ENCODE measurements at regions of chr17 and their contacts with region 1.

Region 1: DNA sequence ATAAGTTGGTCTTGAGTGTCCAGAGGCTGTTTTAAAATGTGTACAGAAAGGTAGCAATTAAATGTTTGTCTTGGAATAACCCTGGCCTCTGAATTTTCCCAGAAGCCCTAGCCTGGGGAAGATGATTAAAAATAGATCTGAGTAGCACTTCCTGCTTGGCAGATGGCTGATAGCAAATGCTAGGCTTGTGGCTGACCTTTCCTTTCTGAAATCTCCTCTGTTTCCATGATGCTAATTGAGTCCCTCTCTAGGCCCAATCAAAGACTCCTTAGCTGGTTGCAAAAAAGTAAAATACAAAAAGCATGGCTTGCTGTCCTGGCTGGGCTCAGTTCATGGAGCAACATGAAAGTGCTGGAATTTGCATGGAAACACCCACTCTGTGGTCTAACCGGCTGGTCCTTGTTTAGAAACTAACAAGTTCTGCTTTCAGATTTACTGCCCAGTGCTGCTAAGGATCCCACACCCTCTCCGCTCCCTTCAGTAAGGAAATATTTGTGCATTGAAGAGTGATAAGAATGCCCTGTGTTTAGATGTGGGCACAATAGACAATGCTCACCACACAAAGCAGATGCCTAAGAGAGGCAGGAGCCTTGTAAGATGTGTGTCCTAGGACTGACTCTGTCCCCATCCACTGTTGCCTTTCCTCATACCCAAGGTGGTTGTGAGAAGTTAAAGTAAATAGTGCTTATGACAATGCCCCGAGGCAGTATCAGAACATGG is 40.8 kb downstream of the YPEL2 start:
- H3K4me3 Mint-ChIP-seq: peak overlapping the region; percentile 34
- H3K27ac Mint-ChIP-seq: peak overlapping the region; percentile 88
- H3K4me1 Mint-ChIP-seq: peaks cover 88% of the 10 kb centered on the region
- H3K27me3 Mint-ChIP-seq: no peaks in the 10 kb centered on the region

Region 2: DNA sequence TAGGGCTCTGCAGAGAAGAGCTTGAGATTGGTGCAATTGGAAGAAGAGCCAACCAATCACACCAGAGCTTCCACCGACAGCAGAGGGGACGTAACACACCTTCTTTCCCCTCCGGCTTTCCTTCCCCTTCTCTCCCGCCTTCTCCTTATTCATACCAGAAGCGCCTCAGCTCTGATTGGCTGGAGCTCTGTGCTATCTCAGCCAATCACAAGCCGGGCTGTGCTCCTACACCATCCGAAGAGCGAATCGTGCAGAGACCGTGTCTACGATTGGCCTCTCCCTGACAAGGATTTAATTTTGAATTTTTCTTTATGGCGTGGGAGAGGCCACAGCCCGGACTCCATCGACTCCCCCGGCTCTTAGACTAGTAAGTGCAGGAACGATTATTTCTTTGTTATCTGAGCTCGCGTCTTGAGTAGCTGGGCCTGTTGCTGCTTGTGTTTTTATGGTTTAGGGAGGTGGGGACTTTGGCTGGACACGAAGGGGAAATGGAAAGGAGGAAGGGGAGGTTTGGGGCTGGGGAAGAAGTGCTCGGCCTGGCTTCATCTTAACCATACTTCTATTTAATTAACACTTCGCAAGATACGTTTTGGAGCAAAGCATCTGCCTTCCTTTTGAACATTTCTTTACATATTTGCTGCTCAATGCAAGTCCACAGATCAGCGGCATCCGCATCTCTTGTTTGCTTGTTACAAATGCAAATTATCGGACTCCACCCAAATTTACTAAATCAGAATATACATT is 216.7 kb before region 1 on chr17 and contains the start of gene PRR11:
- intact Hi-C with region 1: no loop called
- H3K4me3 Mint-ChIP-seq: no peak within 1 kb of the TSS
- H3K27ac Mint-ChIP-seq: no peak within 1 kb of the TSS
- H3K4me1 Mint-ChIP-seq: peaks cover 44% of the 10 kb centered on the region
- H3K27me3 Mint-ChIP-seq: no peaks in the 10 kb centered on the region

Region 3: GRCh38 chr17:59331129-59331928 is 41.0 kb before region 1 on chr17 and contains the start of gene YPEL2:
- intact Hi-C with region 1: loop called (anchors 5 kb)
- H3K4me3 Mint-ChIP-seq: peak within 1 kb of the TSS; percentile 91
- H3K27ac Mint-ChIP-seq: peak within 1 kb of the TSS; percentile 88
- H3K4me1 Mint-ChIP-seq: peaks cover 64% of the 10 kb centered on the region
- H3K27me3 Mint-ChIP-seq: no peaks in the 10 kb centered on the region

Region 4: GRCh38 chr17:59435238-59435637 is 62.9 kb after region 1 on chr17:
- intact Hi-C with region 1: loop called (anchors 5 kb)
- H3K4me3 Mint-ChIP-seq: no peak overlapping the region
- H3K27ac Mint-ChIP-seq: peak overlapping the region; percentile 83
- H3K4me1 Mint-ChIP-seq: peaks cover 74% of the 10 kb centered on the region
- H3K27me3 Mint-ChIP-seq: no peaks in the 10 kb centered on the region

Region 5: GRCh38 chr17:59490216-59490615 is 117.9 kb after region 1 on chr17:
- intact Hi-C with region 1: no loop called
- H3K4me3 Mint-ChIP-seq: no peak overlapping the region
- H3K27ac Mint-ChIP-seq: no peak overlapping the region
- H3K4me1 Mint-ChIP-seq: no peaks in the 10 kb centered on the region
- H3K27me3 Mint-ChIP-seq: peaks cover 2% of the 10 kb centered on the region

Region 6: DNA sequence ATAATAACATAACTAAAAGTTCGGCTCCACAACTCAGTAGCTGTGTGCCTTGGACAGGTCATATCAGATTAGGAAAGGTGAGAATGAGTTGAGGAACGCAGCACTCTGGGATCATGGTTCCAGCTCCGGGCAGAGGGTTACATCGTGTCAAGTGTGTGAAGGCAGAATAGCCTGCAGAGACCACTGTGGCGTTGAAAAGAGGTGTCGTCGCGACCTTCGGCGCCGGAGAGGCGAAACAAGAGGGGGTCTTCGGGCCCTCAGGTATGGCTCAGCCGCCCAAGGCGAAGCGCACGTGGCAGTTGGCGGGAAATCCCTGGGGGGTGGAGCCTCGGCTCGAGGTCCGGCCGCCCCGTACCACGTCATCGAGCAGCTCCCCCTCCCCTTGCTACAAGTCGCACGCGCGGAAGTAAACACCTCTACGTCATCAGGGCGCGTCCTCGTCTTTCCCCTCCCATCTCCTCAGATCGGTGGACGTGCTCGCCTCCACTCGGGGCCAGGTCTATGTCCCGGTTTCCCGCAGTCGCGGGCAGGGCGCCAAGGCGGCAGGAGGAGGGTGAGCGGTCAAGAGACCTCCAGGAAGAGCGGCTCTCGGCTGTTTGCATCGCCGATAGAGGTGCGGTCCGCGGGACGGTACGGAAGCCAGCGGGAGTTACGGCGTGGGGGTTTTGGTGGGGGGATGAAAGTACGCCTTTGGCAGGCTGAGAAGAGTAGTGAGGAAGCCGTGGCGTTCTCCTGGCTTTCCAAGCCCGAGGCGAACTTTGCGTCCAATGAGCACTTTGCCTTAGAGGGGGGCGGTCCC is 193.1 kb after region 1 on chr17 and contains the start of gene DHX40:
- intact Hi-C with region 1: no loop called
- H3K4me3 Mint-ChIP-seq: peak within 1 kb of the TSS; percentile 100
- H3K27ac Mint-ChIP-seq: peak within 1 kb of the TSS; percentile 96
- H3K4me1 Mint-ChIP-seq: peaks cover 19% of the 10 kb centered on the region
- H3K27me3 Mint-ChIP-seq: no peaks in the 10 kb centered on the region

Region 7: GRCh38 chr17:59753522-59754467 is 381.5 kb after region 1 on chr17:
- intact Hi-C with region 1: no loop called
- H3K4me3 Mint-ChIP-seq: no peak overlapping the region
- H3K27ac Mint-ChIP-seq: peak overlapping the region; percentile 83
- H3K4me1 Mint-ChIP-seq: peaks cover 37% of the 10 kb centered on the region
- H3K27me3 Mint-ChIP-seq: no peaks in the 10 kb centered on the region